ENCODE measurements at regions of chr7 and their contacts with region 1.

Region 1: DNA sequence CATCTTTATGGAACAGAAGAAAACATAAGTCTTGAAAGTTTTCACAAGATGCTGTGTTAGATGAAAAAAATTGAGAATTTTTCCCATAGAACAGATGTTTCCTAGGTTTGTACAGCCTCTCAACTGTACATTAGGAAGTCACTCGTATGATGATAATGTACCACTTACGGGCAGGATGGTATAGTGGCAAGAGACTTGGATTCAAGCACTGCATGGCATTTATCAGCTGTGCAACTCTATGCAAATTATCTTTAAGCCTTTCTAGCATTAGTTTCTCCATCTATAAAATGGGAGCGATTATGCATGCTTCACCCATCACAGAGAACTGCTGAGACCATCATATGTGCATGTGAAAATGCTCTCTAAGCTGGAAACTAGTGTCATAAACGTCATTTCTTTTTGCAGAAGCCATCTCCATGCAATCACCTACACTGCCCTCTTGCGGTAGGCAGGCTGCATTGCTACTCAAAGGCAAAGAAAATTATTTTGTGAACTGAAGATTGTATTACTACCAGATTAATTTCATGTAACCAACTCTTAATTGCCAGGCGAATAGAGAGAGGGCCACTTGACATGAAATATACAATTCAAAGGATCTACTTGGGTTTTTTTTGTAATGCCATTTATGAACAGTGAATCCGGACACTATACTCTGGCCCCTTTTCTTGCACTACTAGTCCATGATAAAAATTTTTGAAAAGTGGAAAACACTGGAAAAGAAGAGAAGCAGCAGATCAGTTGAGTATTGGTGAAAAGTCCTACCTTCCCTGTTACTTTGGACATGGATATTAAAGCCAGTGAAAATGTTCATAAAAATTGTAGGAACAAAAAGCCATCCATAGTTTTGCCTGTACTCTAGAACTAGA is 102.3 kb downstream of the JAZF1 start:
- DNase-seq: no peak
- H3K4me3 ChIP-seq: no peak overlapping the region
- H3K27ac ChIP-seq: no peak overlapping the region
- H3K4me1 ChIP-seq: peaks cover 41% of the 10 kb centered on the region
- H3K27me3 ChIP-seq: no peaks in the 10 kb centered on the region
- CTCF ChIP-seq: peak; percentile 96

Region 2: DNA sequence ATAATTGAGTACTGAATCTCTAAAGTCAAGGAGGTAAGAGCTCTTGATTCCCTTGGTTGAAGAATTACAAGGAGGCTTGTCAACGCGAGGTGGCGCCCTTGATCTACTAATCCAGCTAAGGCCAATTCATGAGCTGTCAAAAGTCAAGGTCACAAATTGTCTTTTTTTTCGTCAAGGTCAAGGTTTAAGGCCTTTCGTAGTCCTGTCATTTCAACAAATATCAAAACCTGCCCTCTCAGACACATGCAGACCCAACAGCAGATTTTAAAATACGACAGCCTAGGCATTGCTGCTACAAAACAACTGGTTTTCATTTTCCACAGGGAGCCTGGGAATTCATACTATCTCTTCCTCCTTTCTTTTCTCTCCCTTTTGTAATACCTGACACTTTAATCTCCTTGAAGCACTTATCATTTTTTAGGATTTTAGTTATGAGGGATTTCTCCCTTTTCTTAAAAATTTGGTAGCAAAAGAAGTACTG is 881.9 kb before region 1 on chr7:
- intact Hi-C with region 1: loop called (anchors 5 kb)
- DNase-seq: peak; percentile 83
- H3K4me3 ChIP-seq: no peak overlapping the region
- H3K27ac ChIP-seq: no peak overlapping the region
- H3K4me1 ChIP-seq: peaks cover 44% of the 10 kb centered on the region
- H3K27me3 ChIP-seq: peaks cover 99% of the 10 kb centered on the region
- CTCF ChIP-seq: peak; percentile 84

Region 3: DNA sequence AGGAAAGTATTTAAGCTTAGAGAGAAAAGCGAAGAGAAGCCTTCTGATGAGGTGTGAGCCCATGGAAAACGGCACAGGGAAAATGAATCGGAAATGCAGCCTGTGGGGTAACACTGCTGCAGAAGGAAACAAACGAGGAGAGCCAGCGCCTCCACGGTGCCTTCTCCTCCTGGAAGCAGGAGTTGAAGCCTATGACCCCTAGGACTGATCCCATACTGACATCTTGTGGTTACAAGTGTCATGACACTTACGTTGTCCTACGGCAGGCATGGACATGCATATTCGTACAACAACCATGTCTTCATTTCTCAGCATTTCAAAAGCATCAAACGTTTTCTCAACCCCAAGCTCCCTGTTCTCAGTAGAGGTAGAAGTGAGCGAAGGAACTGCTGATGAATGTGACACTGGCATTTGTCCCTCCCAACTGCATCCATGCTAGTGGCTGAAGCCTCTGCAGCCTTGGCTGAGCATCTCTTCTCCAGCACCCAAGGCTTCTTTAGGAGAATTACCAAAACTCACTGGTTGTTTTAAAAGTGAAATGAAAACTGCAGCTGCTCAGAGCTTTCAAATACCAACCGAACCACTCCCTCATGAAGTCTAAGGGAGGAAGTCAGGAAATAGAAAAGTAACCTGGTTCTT is 57.8 kb before region 1 on chr7:
- intact Hi-C with region 1: no loop called
- DNase-seq: peak; percentile 42
- H3K4me3 ChIP-seq: no peak overlapping the region
- H3K27ac ChIP-seq: no peak overlapping the region
- H3K4me1 ChIP-seq: peaks cover 64% of the 10 kb centered on the region
- H3K27me3 ChIP-seq: no peaks in the 10 kb centered on the region
- CTCF ChIP-seq: peak; percentile 92